ENCODE measurements at regions of chr2 and their contacts with region 1.

Region 1: GRCh38 chr2:220880623-220881596 is 691.2 kb downstream of the EPHA4 start:
- DNase-seq: no peak
- H3K4me3 ChIP-seq: no peak overlapping the region
- H3K27ac ChIP-seq: no peak overlapping the region
- H3K4me1 ChIP-seq: no peaks in the 10 kb centered on the region
- H3K27me3 ChIP-seq: no peaks in the 10 kb centered on the region
- CTCF ChIP-seq: no peak

Region 2: DNA sequence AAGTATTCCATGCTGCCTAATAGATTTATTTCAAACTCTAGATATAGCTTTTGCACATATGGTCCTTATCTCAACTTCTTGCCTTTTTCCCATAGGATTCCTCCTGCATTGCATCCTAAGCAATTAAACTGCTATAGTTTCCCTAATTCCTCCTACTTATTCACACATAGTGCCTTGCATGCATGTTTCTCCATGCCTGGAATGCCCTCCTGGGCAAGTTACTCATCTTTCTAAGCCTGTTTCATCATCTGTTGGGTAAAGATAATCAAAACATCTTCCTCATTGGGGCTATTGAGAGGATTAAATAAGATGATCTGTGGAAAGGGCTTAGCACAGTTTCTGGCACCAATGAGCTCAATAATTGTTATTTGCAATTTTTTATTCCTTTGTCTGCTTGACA is 527.0 kb before region 1 on chr2:
- intact Hi-C with region 1: no loop called
- DNase-seq: no peak
- H3K4me3 ChIP-seq: no peak overlapping the region
- H3K27ac ChIP-seq: no peak overlapping the region
- H3K4me1 ChIP-seq: no peaks in the 10 kb centered on the region
- H3K27me3 ChIP-seq: no peaks in the 10 kb centered on the region
- CTCF ChIP-seq: no peak

Region 3: GRCh38 chr2:221502270-221503010 is 621.5 kb after region 1 on chr2:
- intact Hi-C with region 1: loop called (anchors 5 kb)
- DNase-seq: no peak
- H3K4me3 ChIP-seq: no peak overlapping the region
- H3K27ac ChIP-seq: no peak overlapping the region
- H3K4me1 ChIP-seq: no peaks in the 10 kb centered on the region
- H3K27me3 ChIP-seq: no peaks in the 10 kb centered on the region
- CTCF ChIP-seq: no peak